CD14-positive monocyte (primary cell): ENCODE measurements at regions of chr1 and their contacts with region 1.

Region 1: DNA sequence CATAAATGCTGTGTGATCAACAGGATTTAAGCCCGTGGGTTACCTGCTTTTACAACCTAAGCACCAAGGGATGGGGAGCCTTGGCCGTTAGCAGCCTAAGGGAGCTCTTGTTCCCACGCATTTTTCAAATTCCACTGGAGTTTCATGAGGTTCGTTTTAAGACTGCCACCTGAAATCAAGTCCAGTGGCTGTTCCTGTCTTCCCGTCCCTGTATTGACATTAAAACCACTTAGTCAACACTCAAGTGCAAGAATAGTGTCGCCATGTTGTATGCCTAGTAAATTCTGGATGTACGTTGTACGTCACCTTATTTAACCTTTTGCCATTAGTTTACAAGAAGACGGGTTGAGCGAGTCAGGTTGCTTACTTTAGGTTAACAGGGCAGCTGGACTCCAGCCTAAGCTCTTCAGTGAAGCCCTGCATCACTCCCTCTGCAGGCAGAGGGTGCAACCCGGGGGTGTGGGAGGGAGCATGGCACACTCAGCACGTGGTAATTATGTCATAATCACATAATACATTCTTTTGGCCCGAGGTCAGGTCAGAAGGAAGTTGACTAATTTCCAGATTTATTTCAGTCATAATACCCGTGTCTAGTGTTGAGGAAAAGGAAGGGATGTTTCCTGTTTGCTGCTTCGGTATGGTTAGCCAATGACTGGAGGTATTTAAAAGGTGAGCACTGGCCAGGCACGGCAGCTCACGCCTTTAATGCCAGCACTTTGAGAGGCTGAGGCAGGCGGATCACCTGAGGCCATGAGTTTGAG is 42.5 kb downstream of the CNST start:
- DNase-seq: peak; percentile 86 to 94 (median 93)
- H3K4me3 ChIP-seq: peak overlapping the region in 1 of 3 experiments; percentile 46
- H3K4me3 Mint-ChIP-seq: peak overlapping the region; percentile 66 to 83
- H3K27ac ChIP-seq: peak overlapping the region; percentile 36 to 45
- H3K27ac Mint-ChIP-seq: peak overlapping the region; percentile 86 to 96 (median 94)
- H3K4me1 ChIP-seq: peaks cover 17 to 20% of the 10 kb centered on the region in 2 donors
- H3K4me1 Mint-ChIP-seq: peaks cover 25% of the 10 kb centered on the region
- H3K27me3 ChIP-seq: no peaks in the 10 kb centered on the region
- H3K27me3 Mint-ChIP-seq: peaks cover 0 to 4% (median 1%) of the 10 kb centered on the region in 3 donors
- CTCF ChIP-seq: peak; percentile 23

Region 2: GRCh38 chr1:246566128-246566812 is 42.5 kb before region 1 on chr1 and contains the starts of genes CNST and TFB2M:
- intact Hi-C with region 1: loop called (anchors 2 to 5 kb)
- DNase-seq: peak; percentile 98 to 99 (median 99)
- H3K4me3 ChIP-seq: peak within 1 kb of the TSS; percentile 89 to 99 (median 96)
- H3K4me3 Mint-ChIP-seq: peak within 1 kb of the TSS; percentile 98
- H3K27ac ChIP-seq: peak within 1 kb of the TSS; percentile 92 to 98
- H3K27ac Mint-ChIP-seq: peak within 1 kb of the TSS; percentile 94 to 98 (median 96)
- H3K4me1 ChIP-seq: peaks cover 47 to 62% of the 10 kb centered on the region in 2 donors
- H3K4me1 Mint-ChIP-seq: peaks cover 42% of the 10 kb centered on the region
- H3K27me3 ChIP-seq: no peaks in the 10 kb centered on the region
- H3K27me3 Mint-ChIP-seq: no peaks in the 10 kb centered on the region
- CTCF ChIP-seq: no peak
- polyA plus RNA-seq, gene CNST: 11.0 to 14.1 (median 13.7) TPM
- polyA plus RNA-seq, gene TFB2M: 4.9 to 9.7 (median 7.9) TPM